Calu3 (cell line): ENCODE measurements at regions of chr12 and their contacts with region 1.

Region 1: GRCh38 chr12:14249368-14249767 is 116.1 kb upstream of the ATF7IP start:
- DNase-seq: peak; percentile 39
- H3K4me3 Mint-ChIP-seq: no peak overlapping the region
- H3K27ac Mint-ChIP-seq: peak overlapping the region; percentile 87
- H3K4me1 Mint-ChIP-seq: peaks cover 17% of the 10 kb centered on the region
- H3K27me3 Mint-ChIP-seq: no peaks in the 10 kb centered on the region
- CTCF ChIP-seq: no peak

Region 2: GRCh38 chr12:14403711-14404196 is 154.4 kb after region 1 on chr12:
- CTCF ChIA-PET with region 1: interaction called, 11 read pairs
- intact Hi-C with region 1: no loop called
- DNase-seq: peak; percentile 43
- H3K4me3 Mint-ChIP-seq: no peak overlapping the region
- H3K27ac Mint-ChIP-seq: peak overlapping the region; percentile 34
- H3K4me1 Mint-ChIP-seq: peaks cover 37% of the 10 kb centered on the region
- H3K27me3 Mint-ChIP-seq: no peaks in the 10 kb centered on the region
- CTCF ChIP-seq: no peak